Sciatic nerve (tissue), 2 donors: ENCODE measurements at regions of chr3 and their contacts with region 1.

Region 1: GRCh38 chr3:192816351-192816750 is 89.0 kb upstream of the FGF12 start:
- DNase-seq: no peak
- ATAC-seq: peak; percentile 37

Region 2: GRCh38 chr3:191702121-191702520 is 1114.2 kb before region 1 on chr3:
- intact Hi-C with region 1: no loop called
- DNase-seq: no peak
- ATAC-seq: peak; percentile 10

Region 3: DNA sequence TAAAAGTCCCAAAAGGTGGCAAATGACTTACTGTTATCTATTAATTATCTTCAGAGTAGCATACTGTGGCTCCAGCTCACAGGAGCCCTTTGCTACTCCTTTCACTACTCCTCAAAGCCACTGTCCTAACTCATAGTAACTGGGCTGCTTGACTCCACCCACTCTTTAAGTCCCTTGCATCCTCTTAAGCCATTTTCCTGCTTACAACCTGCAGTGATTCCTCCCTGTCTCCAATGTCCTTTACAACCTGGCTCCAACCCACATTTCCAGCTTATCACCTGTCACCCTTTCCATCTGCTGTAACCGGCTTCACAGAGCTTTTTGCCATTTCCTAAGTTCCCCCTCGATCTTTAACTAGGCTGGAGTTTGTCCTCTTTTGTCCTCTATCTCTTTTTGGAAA is 477.1 kb before region 1 on chr3:
- intact Hi-C with region 1: no loop called
- DNase-seq: no peak
- ATAC-seq: no peak

Region 4: GRCh38 chr3:192675958-192676649 is 140.2 kb before region 1 on chr3:
- intact Hi-C with region 1: no loop called
- DNase-seq: no peak
- ATAC-seq: no peak

Region 5: GRCh38 chr3:192943393-192943792 is 127.0 kb after region 1 on chr3:
- intact Hi-C with region 1: no loop called
- DNase-seq: no peak
- ATAC-seq: peak; percentile 81

Region 6: GRCh38 chr3:193040836-193041672 is 224.7 kb after region 1 on chr3:
- intact Hi-C with region 1: loop called (anchors 5 kb)
- DNase-seq: no peak
- ATAC-seq: peak; percentile 32